PC-3 (cell line): ENCODE measurements at regions of chr7 and their contacts with region 1.

Region 1: DNA sequence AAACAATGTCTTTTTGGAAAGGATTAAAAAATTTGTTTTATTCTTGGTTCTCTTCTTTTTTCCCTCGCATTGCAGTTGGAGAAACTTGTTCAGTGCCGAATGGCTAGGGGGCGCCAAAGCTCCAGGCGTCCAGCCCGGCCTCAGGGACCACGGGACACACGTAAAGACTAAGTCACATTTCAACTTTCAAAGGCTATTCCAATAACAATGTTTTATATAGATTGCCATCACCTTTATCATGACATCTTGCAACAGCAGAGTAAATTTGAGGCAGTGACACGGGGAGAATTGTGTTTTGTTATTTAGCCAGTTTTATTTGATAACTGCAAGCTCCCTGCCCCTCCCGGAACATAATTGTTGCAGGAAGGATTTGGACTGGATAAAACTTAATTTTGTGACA is 2.2 kb upstream of the IGFBP3 start:
- DNase-seq: peak; percentile 83
- ATAC-seq: peak; percentile 28
- H3K4me3 ChIP-seq: peak overlapping the region; percentile 80
- H3K27ac ChIP-seq: peak overlapping the region; percentile 55
- H3K4me1 ChIP-seq: peaks cover 47% of the 10 kb centered on the region
- H3K27me3 ChIP-seq: no peaks in the 10 kb centered on the region
- CTCF ChIP-seq: peak; percentile 97

Region 2: DNA sequence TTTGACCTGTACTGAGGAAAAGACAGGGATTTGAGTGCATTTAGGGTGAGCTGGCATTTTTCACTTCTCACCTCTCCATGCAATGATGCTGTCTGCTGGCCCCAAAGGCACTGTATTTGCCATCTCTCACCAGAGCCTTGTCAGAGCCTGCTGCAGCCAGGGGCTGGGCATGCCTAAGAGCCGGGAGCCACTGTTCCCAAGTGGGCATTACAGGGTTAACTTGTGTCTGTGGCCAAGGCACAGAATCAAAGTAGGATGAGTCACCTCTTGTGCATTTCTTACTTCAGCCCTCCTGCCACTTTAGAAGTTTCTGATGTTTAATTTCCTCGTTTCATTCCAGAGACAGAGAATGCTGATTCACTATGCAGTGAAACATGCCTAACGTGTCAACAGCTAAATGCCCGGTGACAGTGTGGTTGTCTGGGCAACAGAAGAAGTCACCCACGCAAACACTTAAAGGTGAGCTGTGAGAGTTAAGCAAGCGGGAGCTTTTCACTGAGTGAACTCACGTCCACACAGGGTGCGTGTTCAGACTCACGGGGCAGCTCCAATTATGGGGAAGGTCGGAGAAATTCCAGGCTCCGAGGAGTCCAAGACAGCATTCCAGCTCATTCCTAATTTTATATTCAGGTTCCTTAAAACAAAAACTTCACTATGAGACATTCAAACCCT is 54.9 kb after region 1 on chr7:
- CTCF ChIA-PET with region 1: interaction called, 11 read pairs
- POLR2A ChIA-PET with region 1: no interaction called
- intact Hi-C with region 1: loop called (anchors 1 kb)
- DNase-seq: peak; percentile 98
- ATAC-seq: peak; percentile 89
- H3K4me3 ChIP-seq: peak overlapping the region; percentile 31; the same call in 1 of the 2 replicates
- H3K27ac ChIP-seq: peak overlapping the region; percentile 99
- H3K4me1 ChIP-seq: peaks cover 42% of the 10 kb centered on the region
- H3K27me3 ChIP-seq: no peaks in the 10 kb centered on the region
- CTCF ChIP-seq: no peak

Region 3: DNA sequence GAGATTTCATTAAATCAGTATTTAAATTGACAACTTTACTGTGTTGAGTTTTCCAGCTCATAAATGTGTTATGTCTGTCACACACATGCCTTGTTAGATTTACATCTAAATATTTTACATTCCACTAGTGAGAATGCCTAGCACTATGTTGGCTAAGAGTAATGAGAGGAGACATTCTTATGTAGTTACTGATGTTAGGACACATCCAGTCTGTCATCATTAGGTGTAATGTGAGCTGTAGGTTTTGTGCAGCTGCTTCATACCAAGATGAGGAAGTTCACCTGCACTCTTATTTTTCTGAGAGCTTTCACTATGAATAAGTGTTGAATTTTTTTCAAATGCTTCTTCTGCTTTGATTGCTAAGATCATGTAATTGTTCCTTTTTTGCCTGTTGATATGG is 215.8 kb after region 1 on chr7:
- CTCF ChIA-PET with region 1: no interaction called
- POLR2A ChIA-PET with region 1: no interaction called
- intact Hi-C with region 1: loop called (anchors 5 kb)
- DNase-seq: peak; percentile 81
- ATAC-seq: peak; percentile 94
- H3K4me3 ChIP-seq: no peak overlapping the region
- H3K27ac ChIP-seq: no peak overlapping the region
- H3K4me1 ChIP-seq: peaks cover 9% of the 10 kb centered on the region
- H3K27me3 ChIP-seq: no peaks in the 10 kb centered on the region
- CTCF ChIP-seq: no peak

Region 4: GRCh38 chr7:46352004-46352954 is 429.0 kb after region 1 on chr7:
- CTCF ChIA-PET with region 1: interaction called, 3 read pairs
- POLR2A ChIA-PET with region 1: no interaction called
- intact Hi-C with region 1: loop called (anchors 1 kb)
- DNase-seq: peak; percentile 79
- ATAC-seq: peak; percentile 85
- H3K4me3 ChIP-seq: no peak overlapping the region
- H3K27ac ChIP-seq: no peak overlapping the region
- H3K4me1 ChIP-seq: no peaks in the 10 kb centered on the region
- H3K27me3 ChIP-seq: no peaks in the 10 kb centered on the region
- CTCF ChIP-seq: peak; percentile 91

Region 5: GRCh38 chr7:46786221-46786954 is 863.1 kb after region 1 on chr7:
- CTCF ChIA-PET with region 1: interaction called, 4 read pairs
- POLR2A ChIA-PET with region 1: no interaction called
- intact Hi-C with region 1: loop called (anchors 5 kb)
- DNase-seq: peak; percentile 96
- ATAC-seq: peak; percentile 91
- H3K4me3 ChIP-seq: peak overlapping the region; percentile 31; the same call in 1 of the 2 replicates
- H3K27ac ChIP-seq: peak overlapping the region; percentile 96
- H3K4me1 ChIP-seq: peaks cover 38% of the 10 kb centered on the region
- H3K27me3 ChIP-seq: no peaks in the 10 kb centered on the region
- CTCF ChIP-seq: no peak; the same call in 1 of the 2 replicates

Region 6: DNA sequence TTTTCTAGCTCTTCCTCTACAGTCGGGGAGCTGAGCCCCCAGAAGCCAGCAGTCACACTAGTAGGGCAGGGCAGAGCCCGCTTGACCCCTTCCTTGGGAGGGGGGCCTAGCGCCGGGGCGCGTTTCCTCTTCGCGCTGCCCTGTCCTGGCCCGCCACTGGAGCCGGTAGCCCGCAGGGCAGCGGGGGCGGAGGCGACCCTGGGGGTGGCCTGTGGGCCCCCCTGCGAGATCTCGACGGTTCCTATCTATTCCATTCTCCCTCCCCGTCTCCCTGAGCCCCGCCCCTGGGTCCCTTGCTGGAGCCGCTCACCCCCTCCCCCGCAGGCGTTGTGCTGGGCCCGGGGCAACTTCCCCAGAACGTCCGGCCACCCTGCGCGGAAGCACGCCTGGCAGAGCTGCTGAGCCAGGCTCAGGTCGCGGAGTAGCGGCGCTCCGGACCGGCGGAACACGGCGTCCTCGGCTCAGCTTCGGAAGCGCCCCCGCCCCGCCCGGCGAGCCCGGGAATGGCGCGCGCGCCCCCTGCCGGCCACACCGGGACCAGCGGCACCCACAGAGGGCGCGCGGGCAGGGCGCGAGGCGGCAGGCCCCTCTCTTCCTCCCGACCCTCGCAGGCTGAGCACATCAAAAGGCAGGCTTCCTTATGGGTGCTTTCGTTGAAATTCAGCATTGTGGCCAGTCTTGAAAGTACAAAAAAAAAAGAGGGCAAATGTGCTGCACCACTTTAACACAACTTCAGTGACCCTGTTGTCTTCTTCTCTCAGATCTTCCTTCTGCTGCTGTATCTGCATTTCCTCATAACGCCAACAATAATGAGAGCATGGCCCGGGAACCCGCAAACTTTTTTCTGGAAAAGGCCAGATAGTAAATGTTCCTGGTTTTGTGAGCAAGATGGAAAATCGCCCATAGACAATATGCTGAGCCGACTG is 1331.1 kb after region 1 on chr7:
- CTCF ChIA-PET with region 1: no interaction called
- POLR2A ChIA-PET with region 1: no interaction called
- intact Hi-C with region 1: loop called (anchors 5 kb)
- DNase-seq: peak; percentile 63
- ATAC-seq: peak; percentile 75
- H3K4me3 ChIP-seq: peak overlapping the region; percentile 79
- H3K27ac ChIP-seq: no peak overlapping the region; the same call in 1 of the 2 replicates
- H3K4me1 ChIP-seq: peaks cover 13% of the 10 kb centered on the region
- H3K27me3 ChIP-seq: no peaks in the 10 kb centered on the region
- CTCF ChIP-seq: peak; percentile 89